Activated B cell treated with CpG ODN at 0.5 μM for 24 hours (primary cell): ENCODE measurements at regions of chr6 and their contacts with region 1.

Region 1: GRCh38 chr6:157314705-157315321 is 8.5 kb downstream of the TMEM242 start:
- DNase-seq: no peak
- ATAC-seq: peak; percentile 94
- H3K4me3 Mint-ChIP-seq: no peak overlapping the region
- H3K27ac Mint-ChIP-seq: peak overlapping the region; percentile 8
- H3K4me1 Mint-ChIP-seq: peaks cover 4% of the 10 kb centered on the region
- H3K27me3 Mint-ChIP-seq: no peaks in the 10 kb centered on the region
- CTCF ChIP-seq: peak; percentile 93

Region 2: GRCh38 chr6:157563611-157564284 is 248.9 kb after region 1 on chr6:
- CTCF ChIA-PET with region 1: interaction called, 5 read pairs
- POLR2A ChIA-PET with region 1: interaction called, 3 read pairs
- intact Hi-C with region 1: loop called (anchors 2 kb)
- DNase-seq: no peak
- ATAC-seq: peak; percentile 69
- H3K4me3 Mint-ChIP-seq: peak overlapping the region; percentile 44
- H3K27ac Mint-ChIP-seq: peak overlapping the region; percentile 80
- H3K4me1 Mint-ChIP-seq: peaks cover 92% of the 10 kb centered on the region
- H3K27me3 Mint-ChIP-seq: no peaks in the 10 kb centered on the region
- CTCF ChIP-seq: no peak

Region 3: DNA sequence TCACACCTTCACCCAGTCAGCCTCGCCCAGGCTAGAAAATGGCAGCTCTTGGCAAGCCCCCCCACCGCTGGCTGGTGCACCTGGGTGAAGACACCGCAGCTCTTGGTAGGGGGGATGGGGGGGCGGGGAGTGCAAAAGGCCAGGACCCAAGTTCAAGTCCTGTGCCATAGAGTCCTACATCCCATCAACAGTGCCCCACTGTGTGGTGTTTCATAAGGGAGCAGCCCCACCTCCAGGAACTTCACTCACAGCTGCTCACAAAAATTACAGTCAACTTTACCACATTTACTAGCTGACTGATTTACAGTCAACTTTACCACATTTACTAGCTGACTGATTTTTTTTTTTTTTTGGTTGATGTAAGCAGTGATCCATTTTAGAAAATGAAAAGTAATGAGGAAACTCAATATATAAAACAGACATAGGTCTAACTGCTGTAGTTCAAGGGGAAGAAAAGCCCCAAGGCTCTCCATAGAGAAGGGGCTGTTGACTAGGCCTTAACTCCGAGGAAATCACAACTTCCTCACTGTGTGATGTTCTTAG is 299.3 kb after region 1 on chr6:
- CTCF ChIA-PET with region 1: interaction called, 24 read pairs
- POLR2A ChIA-PET with region 1: interaction called, 4 read pairs
- intact Hi-C with region 1: loop called (anchors 1 kb)
- DNase-seq: no peak
- ATAC-seq: peak; percentile 74
- H3K4me3 Mint-ChIP-seq: peak overlapping the region; percentile 41
- H3K27ac Mint-ChIP-seq: peak overlapping the region; percentile 85
- H3K4me1 Mint-ChIP-seq: peaks cover 67% of the 10 kb centered on the region
- H3K27me3 Mint-ChIP-seq: no peaks in the 10 kb centered on the region
- CTCF ChIP-seq: no peak

Region 4: DNA sequence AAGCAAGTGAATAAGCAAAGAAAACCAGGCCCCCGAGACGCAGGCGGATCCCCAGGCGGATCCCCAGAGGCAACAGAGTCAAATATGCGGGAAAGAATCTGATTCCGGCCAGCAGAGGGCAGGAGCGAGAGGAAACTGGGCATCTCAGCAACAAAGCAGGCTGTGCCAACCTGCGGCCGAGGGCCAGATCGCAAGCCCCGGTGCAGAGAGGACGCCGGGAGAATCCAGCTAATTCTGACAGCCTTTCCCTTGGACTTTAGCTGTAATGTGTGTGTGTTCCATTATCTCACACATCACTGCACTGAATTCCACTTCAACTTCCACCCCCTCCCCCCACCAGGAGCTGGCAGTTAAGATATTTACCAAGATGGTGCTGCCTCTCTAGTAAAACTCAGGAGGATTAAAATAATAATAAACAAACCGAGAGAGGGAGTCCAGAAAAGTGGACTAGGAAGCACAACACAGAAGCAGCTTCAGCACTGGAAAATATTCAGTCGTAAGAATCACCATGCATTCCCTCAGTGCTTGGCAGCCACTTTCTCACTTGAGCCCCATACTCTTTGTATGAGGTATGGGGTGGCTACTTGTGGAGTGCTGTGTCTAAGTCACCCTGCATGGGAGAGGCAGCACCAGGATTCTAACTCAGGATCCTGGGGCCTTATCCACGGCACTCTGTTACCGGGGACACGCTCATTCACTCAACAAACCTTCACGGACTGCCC is 442.1 kb after region 1 on chr6:
- CTCF ChIA-PET with region 1: interaction called, 11 read pairs
- POLR2A ChIA-PET with region 1: no interaction called
- intact Hi-C with region 1: loop called (anchors 1 kb)
- DNase-seq: peak; percentile 72
- ATAC-seq: peak; percentile 54
- H3K4me3 Mint-ChIP-seq: peak overlapping the region; percentile 38
- H3K27ac Mint-ChIP-seq: no peak overlapping the region
- H3K4me1 Mint-ChIP-seq: peaks cover 69% of the 10 kb centered on the region
- H3K27me3 Mint-ChIP-seq: peaks cover 6% of the 10 kb centered on the region
- CTCF ChIP-seq: peak; percentile 60

Region 5: DNA sequence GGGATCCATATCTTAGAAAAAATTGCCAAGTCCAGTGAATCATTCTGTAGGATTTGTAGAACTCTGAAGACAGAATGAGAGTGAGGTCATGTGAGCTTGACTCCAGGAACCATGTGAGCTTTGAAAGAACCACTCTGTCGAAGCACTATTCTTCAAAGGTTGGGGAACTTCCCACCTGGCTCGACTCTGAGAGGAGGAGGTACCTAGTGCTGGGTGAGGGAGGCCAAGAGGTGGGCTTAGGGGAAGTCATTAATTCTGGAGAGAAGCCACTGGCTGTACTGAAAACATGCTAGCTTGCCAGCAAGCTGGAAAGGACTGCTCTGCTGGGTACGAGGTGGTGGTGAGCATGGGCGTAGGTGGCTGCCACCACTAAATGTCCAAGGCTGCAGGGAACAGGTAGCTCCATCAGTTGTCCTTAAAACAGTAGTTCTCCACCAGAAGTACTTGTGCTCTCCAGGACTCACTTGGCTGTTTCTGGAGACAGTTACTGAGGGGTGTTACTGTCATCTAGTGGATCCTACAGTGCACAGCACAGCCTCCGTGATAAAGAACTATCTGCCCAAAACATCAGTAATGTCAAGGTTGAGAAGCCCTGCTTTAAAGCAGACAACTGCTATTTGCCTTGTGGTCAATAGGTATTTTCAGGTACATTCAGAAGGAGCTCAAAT is 632.2 kb after region 1 on chr6:
- CTCF ChIA-PET with region 1: interaction called, 5 read pairs
- POLR2A ChIA-PET with region 1: no interaction called
- intact Hi-C with region 1: loop called (anchors 2 kb)
- DNase-seq: no peak
- ATAC-seq: peak; percentile 42
- H3K4me3 Mint-ChIP-seq: no peak overlapping the region
- H3K27ac Mint-ChIP-seq: no peak overlapping the region
- H3K4me1 Mint-ChIP-seq: peaks cover 7% of the 10 kb centered on the region
- H3K27me3 Mint-ChIP-seq: no peaks in the 10 kb centered on the region
- CTCF ChIP-seq: no peak